GM10248 (cell line): ENCODE measurements at regions of chr15 and their contacts with region 1.

Region 1: DNA sequence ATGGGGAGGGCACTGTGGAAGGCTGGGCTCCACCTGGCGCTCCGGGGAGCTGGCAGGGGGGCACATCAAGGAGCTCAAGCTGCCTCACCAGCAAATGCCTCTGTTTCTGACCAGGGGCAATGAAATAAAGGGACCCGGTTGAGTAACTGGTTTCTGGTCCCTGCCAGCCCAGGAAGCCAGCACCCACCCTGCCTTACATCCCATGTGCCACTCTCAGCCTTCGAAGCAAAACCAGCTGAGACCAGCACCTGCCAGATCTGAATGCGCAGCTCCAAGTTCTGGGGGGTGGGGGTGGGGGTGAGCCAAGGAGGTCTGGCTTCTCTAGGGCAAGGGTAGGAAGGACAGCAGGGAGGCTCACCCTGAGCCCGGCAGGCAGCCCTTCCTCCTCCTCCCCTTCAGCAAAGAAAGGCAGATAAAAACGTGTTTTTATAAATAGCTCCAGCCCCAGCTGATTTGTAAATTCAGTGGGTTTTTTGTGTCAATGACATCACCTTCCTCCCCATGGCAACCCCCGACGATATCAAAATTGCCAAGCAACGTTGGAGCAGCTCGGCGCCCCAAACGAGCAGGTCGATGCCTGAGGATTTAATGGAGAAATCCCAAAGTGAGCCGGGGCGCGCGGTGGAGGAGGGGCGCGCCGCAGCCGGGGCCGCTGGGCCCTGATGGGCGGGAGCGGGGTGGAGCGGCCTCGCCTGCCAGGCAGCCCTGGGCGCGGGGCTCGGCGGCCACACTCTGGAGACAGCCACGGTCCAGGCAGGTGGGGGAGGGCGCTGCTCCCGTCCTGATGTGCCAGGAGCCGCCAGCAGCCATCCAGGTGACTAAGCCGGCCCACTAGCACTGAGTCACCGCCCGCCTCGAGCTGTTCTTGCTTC is at the start of gene PAK6:
- DNase-seq: no peak
- CTCF ChIP-seq: no peak

Region 2: GRCh38 chr15:39362821-39363561 is 875.8 kb before region 1 on chr15:
- CTCF ChIA-PET with region 1: no interaction called
- POLR2A ChIA-PET with region 1: no interaction called
- DNase-seq: no peak
- CTCF ChIP-seq: no peak

Region 3: DNA sequence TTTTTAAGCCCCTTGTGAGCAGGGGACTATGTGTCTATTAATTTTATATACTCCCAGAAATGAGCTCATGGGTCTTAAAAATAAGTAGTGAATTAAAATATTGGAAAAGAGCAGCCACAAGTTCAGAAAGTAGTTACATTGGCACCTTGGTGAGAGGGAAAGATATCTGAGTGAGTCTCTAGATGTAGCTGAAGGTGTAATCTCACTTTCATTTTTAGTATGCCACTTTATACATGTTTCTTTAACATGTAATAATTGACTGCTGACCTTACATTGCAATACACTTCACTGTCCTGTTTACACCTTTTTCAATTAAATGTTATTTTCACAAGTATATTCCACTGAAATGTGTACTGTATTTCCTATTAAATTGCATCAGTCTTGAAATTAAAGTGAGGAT is 12.0 kb before region 1 on chr15:
- CTCF ChIA-PET with region 1: interaction called, 13 read pairs
- POLR2A ChIA-PET with region 1: interaction called, 3 read pairs
- DNase-seq: no peak
- CTCF ChIP-seq: no peak

Region 4: GRCh38 chr15:40249482-40250303 is 10.9 kb after region 1 on chr15:
- CTCF ChIA-PET with region 1: interaction called, 15 read pairs
- POLR2A ChIA-PET with region 1: no interaction called
- DNase-seq: no peak
- CTCF ChIP-seq: no peak

Region 5: GRCh38 chr15:40454904-40455391 is 216.2 kb after region 1 on chr15:
- CTCF ChIA-PET with region 1: no interaction called
- POLR2A ChIA-PET with region 1: no interaction called
- DNase-seq: no peak
- CTCF ChIP-seq: no peak